ENCODE measurements at regions of chr7 and their contacts with region 1.

Region 1: DNA sequence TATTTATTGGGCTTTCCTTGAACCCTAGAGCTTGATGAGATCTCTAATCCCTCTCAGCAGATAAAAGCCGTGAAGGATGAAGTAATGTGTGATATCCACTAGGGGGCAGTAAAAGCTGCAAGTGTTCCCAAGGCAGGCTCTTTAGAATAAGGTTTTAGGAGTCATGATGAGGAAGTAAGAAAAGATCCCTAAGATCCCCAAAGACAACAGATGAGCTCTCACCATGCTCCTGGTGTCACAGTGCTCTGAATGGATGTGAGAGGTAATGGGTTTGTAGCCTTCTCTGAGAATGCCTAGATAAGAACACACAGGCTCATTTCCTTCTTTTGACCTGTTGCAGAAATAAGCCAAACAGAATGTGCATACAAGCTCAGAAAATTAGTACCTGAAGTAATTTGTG is 70.4 kb upstream of the ITPRID1 start:
- DNase-seq: peak; percentile 25 to 62 (median 58)
- H3K4me3 ChIP-seq: no peak overlapping the region
- H3K27ac ChIP-seq: no peak overlapping the region
- H3K4me1 ChIP-seq: no peaks in the 10 kb centered on the region
- H3K27me3 ChIP-seq: peaks cover 0 to 5% (median 2%) of the 10 kb centered on the region in 5 experiments

Region 2: GRCh38 chr7:31290601-31291000 is 152.9 kb before region 1 on chr7:
- CTCF ChIA-PET with region 1: no interaction called
- POLR2A ChIA-PET with region 1: no interaction called
- DNase-seq: no peak
- H3K4me3 ChIP-seq: no peak overlapping the region
- H3K27ac ChIP-seq: no peak overlapping the region
- H3K4me1 ChIP-seq: no peaks in the 10 kb centered on the region
- H3K27me3 ChIP-seq: peaks cover 0 to 5% (median 0%) of the 10 kb centered on the region in 5 experiments

Region 3: GRCh38 chr7:31345421-31345820 is 98.0 kb before region 1 on chr7:
- CTCF ChIA-PET with region 1: no interaction called
- POLR2A ChIA-PET with region 1: no interaction called
- DNase-seq: no peak
- H3K4me3 ChIP-seq: no peak overlapping the region
- H3K27ac ChIP-seq: no peak overlapping the region
- H3K4me1 ChIP-seq: no peaks in the 10 kb centered on the region
- H3K27me3 ChIP-seq: peaks cover 0 to 34% (median 3%) of the 10 kb centered on the region in 5 experiments

Region 4: DNA sequence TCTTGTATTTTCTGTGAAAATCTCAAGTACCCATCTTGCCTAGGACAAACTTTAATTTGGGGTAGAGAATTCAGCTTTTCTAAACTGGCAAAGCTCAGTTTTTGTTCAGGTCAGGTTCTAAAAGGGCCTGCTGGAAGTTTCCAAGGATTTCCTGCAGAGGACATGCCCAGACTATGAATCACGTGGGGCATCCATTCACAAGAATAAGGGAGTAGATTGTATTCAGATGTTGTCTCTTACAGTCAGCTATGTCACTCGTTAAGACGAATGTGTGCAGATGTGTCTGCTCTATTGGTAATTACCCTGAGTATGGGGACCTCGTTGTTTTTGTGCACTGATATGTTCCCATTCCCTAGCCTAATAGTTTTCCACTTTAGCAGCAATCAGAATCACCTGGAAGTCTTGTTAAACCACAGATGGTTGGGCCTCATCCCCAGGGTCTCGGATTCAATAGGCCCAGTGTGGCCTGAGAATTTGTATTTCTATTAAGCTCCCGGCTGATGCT is 10.6 kb before region 1 on chr7:
- CTCF ChIA-PET with region 1: interaction called, 14 read pairs
- POLR2A ChIA-PET with region 1: no interaction called
- DNase-seq: no peak
- H3K4me3 ChIP-seq: no peak overlapping the region
- H3K27ac ChIP-seq: no peak overlapping the region
- H3K4me1 ChIP-seq: no peaks in the 10 kb centered on the region
- H3K27me3 ChIP-seq: peaks cover 0 to 7% (median 2%) of the 10 kb centered on the region in 5 experiments

Measured in common myeloid progenitor, CD34-positive (primary cell).